ENCODE measurements at regions of chr21 and their contacts with region 1.

Region 1: DNA sequence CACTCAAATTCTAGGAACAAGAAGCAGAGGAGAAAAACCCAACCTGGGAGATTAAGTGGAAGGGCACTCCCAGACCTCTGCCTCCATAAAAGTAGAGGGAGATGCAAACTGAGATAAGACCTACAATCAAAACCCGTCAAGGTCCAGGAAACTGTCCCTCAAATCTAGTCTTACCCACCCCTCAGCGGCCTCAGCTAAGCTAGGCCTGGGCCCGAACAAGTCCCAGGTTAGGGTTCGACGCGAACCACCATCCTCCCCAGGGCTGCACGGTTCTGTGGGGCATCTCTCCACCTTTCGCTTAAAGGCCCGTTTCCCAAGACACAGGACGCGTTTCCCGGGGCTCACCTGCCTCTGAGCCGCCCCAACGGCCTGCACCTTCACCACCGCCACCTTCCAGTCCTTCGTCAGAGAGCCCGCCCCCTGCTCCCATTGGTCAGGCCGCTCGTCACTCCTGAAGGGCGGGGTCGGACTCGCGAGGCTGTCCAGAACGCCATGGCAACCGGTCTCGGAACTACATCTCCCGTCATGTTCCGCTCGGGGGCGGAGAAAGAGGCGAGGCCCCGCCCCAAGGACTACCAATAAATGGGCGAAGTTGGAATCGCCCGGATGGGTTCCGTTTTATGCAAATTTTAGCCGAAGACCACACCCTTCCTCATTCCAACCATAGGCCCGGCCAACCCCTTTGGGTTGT is at the start of gene CRYZL1:
- DNase-seq: peak; percentile 100
- ATAC-seq: peak; percentile 93
- total RNA-seq, gene CRYZL1: 23.2 TPM

Region 2: GRCh38 chr21:33685613-33686197 is 44.2 kb after region 1 on chr21:
- intact Hi-C with region 1: loop called (anchors 5 kb)
- DNase-seq: no peak
- ATAC-seq: no peak

Region 3: DNA sequence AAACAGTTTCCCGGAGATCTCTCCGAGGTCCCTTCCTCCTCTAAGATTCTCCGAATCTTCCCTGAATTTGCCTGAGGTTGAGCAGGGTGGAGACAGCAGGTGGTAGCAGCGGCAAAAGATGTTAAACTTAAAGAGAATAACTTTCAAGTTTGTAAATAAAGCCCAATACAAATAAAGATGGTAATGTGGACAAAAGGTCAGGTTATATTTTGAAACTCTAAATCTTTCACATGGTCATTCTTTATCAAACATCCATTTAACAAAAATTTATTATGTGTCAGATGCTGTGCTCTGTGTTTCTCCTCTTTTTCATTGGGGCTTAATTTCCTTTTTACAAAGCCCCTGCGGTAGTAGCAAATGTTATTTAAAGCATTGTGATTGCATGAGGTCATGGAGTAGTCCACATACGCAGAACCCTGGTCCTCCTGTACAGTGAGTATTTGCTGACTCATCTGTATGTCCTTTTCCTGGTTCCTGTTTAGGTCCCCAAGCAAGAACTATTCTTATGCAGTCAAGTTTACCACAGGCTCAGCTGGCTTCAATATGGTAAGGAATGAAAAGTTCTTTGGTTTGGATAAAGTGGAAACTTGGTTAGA is 120.1 kb after region 1 on chr21:
- intact Hi-C with region 1: loop called (anchors 5 kb)
- DNase-seq: no peak
- ATAC-seq: peak; percentile 69

Region 4: DNA sequence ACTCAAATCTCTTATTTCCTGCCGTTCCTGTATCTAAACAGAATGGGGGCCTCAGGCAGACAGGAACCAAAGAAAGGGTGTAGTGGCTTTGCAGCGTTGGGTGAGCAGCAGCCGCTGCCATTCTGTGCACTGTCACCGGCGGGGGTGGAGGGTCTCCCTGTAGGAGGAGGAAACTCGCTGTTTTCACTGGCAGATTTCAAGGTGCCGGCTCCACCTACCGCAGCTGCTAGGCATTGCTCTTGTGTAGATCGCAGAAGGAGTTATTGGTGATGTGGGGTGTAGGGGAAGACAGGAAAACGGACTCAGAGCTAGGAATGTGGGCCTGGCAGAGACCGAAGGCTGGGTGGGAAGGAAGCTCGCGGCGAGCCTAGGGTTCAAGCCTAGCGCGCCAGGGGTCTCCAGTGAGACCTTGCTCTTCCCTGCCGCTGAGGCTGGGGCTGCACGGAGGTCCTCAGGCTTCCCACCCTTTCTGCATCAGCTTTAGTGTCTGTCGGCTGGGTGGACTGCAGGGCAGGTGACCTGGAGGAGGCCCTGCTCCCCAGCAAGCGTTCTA is 253.3 kb after region 1 on chr21:
- intact Hi-C with region 1: loop called (anchors 5 kb)
- DNase-seq: peak; percentile 87
- ATAC-seq: peak; percentile 91

Measured in Right ventricle myocardium inferior (tissue), 1 donor.